ENCODE measurements at regions of chr5 and their contacts with region 1.

Region 1: GRCh38 chr5:61658592-61659008 is 326.5 kb downstream of the ZSWIM6 start:
- DNase-seq: peak; percentile 86 to 96
- ATAC-seq: peak; percentile 82
- H3K4me3 ChIP-seq: no peak overlapping the region
- H3K27ac ChIP-seq: no peak overlapping the region
- H3K4me1 ChIP-seq: no peaks in the 10 kb centered on the region
- H3K27me3 ChIP-seq: no peaks in the 10 kb centered on the region

Region 2: DNA sequence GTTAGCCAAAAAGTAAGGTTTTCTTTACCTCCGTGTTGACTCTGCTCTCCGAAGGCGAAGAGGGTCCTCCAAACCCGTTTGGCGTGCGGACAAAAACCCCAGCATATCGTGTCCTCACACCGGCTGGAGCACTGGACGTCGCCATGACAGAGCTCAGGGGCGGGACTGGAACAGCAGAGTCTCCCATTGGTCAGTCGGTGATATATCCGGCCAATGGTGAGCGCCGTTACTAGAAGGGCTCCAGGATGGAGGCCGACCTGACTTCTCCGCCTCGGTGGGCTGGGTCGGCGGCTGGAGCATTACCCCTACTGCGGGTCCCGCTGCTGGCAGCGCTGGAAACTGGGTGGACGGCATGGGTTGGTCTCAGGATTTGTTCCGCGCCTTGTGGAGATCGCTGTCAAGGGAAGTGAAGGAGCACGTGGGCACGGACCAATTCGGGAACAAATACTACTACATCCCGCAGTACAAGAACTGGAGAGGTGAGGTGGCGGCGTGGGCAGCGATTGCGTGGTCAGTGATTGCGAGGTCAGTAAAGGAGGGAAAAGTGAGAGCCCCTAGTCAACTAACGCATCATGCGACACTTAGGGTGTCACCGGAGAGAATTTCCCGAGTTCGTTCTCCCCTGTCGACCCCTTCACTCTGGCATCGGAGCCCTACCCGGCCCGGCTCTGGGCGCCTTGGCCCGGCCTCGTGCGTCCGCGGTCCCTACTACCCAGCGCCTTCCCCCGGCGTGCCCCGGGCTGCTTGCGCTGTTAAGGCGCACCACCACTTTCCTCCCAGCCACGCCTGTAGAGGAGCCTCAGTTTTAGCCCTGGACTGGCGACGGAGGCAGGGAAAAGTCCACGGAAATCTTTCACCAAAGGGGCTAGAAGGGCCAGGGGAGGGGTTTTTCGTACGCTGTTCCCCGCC is 713.4 kb before region 1 on chr5 and contains the starts of genes ERCC8 and NDUFAF2:
- intact Hi-C with region 1: loop called in 1 of 2 experiments (anchors 10 kb)
- DNase-seq: peak; percentile 94 to 95
- ATAC-seq: peak; percentile 99
- H3K4me3 ChIP-seq: peak within 1 kb of the TSS; percentile 74 to 92
- H3K27ac ChIP-seq: peak within 1 kb of the TSS in 1 of 2 donors; percentile 50
- H3K4me1 ChIP-seq: peaks cover 0 to 2% of the 10 kb centered on the region in 2 donors
- H3K27me3 ChIP-seq: no peaks in the 10 kb centered on the region
- total RNA-seq, gene ERCC8: 9.7 to 10.4 TPM
- total RNA-seq, gene NDUFAF2: 26.1 to 32.1 TPM

Region 3: GRCh38 chr5:61162010-61162831 is 496.4 kb before region 1 on chr5 and contains the start of gene SMIM15:
- intact Hi-C with region 1: loop called in 1 of 2 experiments (anchors 5 kb)
- DNase-seq: peak; percentile 94 to 95
- ATAC-seq: peak; percentile 97
- H3K4me3 ChIP-seq: peak within 1 kb of the TSS; percentile 49 to 67
- H3K27ac ChIP-seq: peak within 1 kb of the TSS in 1 of 2 donors; percentile 52
- H3K4me1 ChIP-seq: peaks cover 3 to 6% of the 10 kb centered on the region in 2 donors
- H3K27me3 ChIP-seq: no peaks in the 10 kb centered on the region
- total RNA-seq, gene SMIM15: 33.3 to 41.1 TPM

Region 4: DNA sequence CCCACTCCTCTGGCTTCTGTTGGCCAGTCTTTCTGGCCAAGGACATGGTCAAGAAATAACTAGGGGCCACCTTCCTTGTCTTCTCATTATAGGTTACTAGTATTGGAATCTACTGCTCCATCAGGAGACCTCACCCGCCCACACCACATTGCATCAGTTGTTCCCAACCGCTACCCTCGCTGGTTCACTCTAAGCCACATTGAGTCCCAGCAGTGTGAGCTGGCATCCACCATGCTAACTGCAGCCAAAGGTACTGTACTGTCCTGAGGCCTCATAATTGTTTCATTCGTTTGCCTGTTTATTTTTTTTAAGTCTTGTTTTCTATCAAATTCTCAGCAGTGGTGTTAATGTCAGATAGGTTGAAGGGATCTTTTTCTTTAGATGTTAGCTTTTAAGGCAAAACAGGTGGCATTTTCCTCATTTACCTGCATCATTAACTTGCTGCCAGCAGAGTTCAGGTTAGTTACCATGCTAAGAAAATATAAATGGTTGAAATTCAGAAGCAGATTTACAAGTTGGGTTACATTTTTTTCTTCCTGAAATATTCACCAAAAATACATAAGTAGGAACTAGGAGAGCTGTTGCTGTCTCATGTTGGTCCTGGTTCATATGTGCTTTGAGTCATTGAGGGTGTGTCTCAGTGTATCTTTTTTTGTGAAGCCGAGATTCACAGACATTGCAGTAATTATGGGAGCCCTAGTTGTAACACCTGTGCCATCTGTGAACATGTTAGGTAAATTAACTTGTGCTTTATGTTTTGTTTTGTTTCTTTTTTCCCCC is 119.7 kb before region 1 on chr5:
- intact Hi-C with region 1: no loop called
- DNase-seq: no peak
- ATAC-seq: peak; percentile 57
- H3K4me3 ChIP-seq: no peak overlapping the region
- H3K27ac ChIP-seq: no peak overlapping the region
- H3K4me1 ChIP-seq: no peaks in the 10 kb centered on the region
- H3K27me3 ChIP-seq: no peaks in the 10 kb centered on the region

Region 5: DNA sequence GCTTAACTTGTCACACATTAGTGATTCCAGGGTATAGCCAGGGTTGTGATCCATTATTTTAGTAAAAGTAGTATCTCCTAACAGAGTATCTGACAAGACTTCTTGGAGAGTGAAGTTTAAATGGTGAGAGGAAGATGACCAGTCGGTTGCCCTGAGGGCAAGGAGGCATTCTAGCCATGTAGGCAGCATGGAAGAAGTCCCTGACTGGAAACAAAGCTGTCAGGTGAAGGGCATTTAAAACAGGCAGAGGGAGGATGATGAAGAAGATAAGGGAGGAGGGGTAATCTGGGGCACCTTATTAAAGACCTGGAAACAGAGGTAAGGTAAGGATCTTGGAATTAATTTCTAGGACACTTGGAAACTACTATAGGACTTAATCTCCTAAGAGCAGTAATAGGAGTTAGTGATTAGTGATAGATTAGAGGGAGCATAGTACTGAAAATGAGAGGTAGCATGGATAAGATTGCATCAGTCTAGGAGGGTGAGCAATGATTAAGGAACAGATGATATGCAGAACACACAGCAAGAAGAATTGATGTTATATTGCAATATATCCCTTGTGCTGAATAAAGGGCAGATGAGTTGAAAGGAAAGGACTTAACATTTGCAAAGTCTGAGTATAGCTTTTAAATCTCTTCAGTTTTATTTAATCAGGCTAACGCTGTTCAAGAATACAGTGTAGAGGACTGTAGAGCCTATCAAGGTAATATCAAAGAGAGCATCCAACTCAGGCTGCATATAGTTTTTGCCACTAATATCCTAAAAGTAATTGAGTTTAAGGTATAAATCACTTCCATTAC is 657.0 kb after region 1 on chr5:
- intact Hi-C with region 1: no loop called
- DNase-seq: no peak
- ATAC-seq: no peak
- H3K4me3 ChIP-seq: no peak overlapping the region
- H3K27ac ChIP-seq: no peak overlapping the region
- H3K4me1 ChIP-seq: peaks cover 1 to 7% of the 10 kb centered on the region in 2 donors
- H3K27me3 ChIP-seq: no peaks in the 10 kb centered on the region